ENCODE measurements at regions of chr13 and their contacts with region 1.

Region 1: DNA sequence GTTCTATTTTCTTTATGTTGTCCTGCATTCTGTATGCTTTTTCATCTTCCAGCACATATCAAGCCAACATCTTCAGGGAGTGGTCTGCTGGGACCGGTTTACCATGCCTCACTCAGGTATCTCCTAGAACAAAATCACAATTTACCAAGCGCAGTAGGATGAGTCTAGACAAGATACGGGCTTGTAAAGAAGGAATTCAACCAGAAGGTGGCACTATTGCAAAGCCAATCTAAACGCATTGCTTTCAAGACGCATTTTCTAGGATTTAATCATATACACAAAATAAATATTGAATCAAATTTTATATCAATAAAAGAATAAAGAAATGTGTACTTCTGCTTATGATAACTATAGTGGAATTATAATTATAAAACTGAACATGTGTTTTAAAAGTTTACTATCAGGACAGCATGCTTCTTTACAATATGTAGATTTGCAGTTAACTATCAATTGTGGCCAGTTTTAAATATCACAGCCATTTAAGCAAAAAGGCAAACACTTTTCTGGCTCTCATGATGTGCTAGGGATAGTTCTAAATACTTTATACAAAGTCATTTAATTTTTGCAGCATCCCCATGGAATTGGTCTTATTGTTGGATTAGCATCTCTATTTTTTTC is 16.1 kb upstream of the TPP2 start:
- DNase-seq: peak; percentile 74
- H3K4me3 Mint-ChIP-seq: no peak overlapping the region
- H3K27ac Mint-ChIP-seq: no peak overlapping the region
- H3K4me1 Mint-ChIP-seq: peaks cover 5% of the 10 kb centered on the region
- H3K27me3 Mint-ChIP-seq: peaks cover 13% of the 10 kb centered on the region
- CTCF ChIP-seq: peak; percentile 67

Region 2: GRCh38 chr13:102606537-102607309 is 26.1 kb after region 1 on chr13:
- CTCF ChIA-PET with region 1: interaction called, 10 read pairs
- POLR2A ChIA-PET with region 1: no interaction called
- intact Hi-C with region 1: no loop called
- DNase-seq: no peak
- H3K4me3 Mint-ChIP-seq: no peak overlapping the region
- H3K27ac Mint-ChIP-seq: no peak overlapping the region
- H3K4me1 Mint-ChIP-seq: peaks cover 10% of the 10 kb centered on the region
- H3K27me3 Mint-ChIP-seq: no peaks in the 10 kb centered on the region
- CTCF ChIP-seq: no peak

Region 3: GRCh38 chr13:102773441-102774215 is 193.0 kb after region 1 on chr13 and contains the start of gene TEX30:
- CTCF ChIA-PET with region 1: interaction called, 5 read pairs
- POLR2A ChIA-PET with region 1: no interaction called
- intact Hi-C with region 1: loop called (anchors 1 kb)
- DNase-seq: peak; percentile 79
- H3K4me3 Mint-ChIP-seq: peak within 1 kb of the TSS; percentile 80
- H3K27ac Mint-ChIP-seq: peak within 1 kb of the TSS; percentile 87
- H3K4me1 Mint-ChIP-seq: peaks cover 18% of the 10 kb centered on the region
- H3K27me3 Mint-ChIP-seq: no peaks in the 10 kb centered on the region
- CTCF ChIP-seq: no peak
- total RNA-seq, gene TEX30: 10.7 and 14.2 TPM in 2 replicates

Region 4: DNA sequence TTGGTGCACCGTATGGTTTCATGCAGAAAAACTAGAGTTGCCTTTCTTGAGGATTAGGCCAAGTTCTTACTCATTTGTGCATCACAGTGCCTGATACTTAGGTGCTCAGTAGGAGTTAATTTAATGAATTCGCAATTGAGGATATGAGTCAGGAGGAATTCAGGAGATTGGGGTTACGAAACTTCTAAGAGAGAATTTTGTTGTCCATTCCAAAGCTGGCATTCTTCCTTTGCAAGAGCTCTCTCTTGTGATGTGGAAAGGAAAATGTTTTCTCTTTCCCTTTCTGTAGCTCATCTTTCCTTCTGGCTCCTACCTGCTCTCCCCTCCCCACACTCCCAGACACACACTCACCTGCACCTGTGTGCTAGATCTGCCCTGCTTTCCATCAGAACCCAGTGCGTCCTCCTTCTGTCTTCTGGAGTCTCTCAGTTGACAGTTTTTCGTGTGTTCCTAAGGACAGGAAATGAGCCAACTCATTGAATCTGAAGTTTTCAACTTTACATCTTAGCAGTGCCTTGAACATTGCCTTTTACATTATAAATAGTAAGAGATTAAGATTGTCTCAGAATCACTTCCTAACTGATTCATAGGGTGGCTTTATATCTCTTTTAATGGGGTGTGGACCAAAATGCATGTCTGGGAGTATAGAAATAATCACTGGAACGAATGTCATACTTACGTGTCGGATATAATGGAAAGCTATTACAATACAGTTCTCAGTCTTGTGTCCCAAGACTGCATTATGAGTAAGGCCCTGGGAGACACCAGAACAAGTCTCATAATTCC is 245.5 kb after region 1 on chr13:
- CTCF ChIA-PET with region 1: interaction called, 5 read pairs
- POLR2A ChIA-PET with region 1: interaction called, 3 read pairs
- intact Hi-C with region 1: loop called (anchors 1 kb)
- DNase-seq: peak; percentile 91
- H3K4me3 Mint-ChIP-seq: peak overlapping the region; percentile 72
- H3K27ac Mint-ChIP-seq: peak overlapping the region; percentile 82
- H3K4me1 Mint-ChIP-seq: peaks cover 24% of the 10 kb centered on the region
- H3K27me3 Mint-ChIP-seq: no peaks in the 10 kb centered on the region
- CTCF ChIP-seq: peak; percentile 9

Region 5: DNA sequence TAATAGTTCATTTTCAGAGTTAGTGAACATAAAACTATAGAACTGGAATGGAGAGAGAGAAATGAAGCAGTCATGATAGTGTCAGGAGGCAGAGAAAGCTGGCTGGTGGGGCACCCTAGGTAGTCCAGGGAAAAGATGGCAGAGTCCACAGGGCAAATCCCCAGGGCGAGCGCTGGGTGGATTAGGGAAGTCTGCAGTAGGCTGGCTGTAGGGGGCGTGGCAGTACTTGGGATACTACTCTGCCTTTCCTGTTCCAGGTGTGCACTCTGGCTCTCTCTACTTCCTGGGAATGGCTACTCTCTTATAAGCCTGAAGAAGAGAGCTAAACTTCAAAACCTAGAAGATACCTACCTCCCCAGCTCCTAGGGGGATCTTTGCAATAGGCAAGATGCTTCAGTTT is 718.4 kb after region 1 on chr13:
- CTCF ChIA-PET with region 1: no interaction called
- POLR2A ChIA-PET with region 1: no interaction called
- intact Hi-C with region 1: no loop called
- DNase-seq: no peak
- H3K4me3 Mint-ChIP-seq: no peak overlapping the region
- H3K27ac Mint-ChIP-seq: no peak overlapping the region
- H3K4me1 Mint-ChIP-seq: no peaks in the 10 kb centered on the region
- H3K27me3 Mint-ChIP-seq: no peaks in the 10 kb centered on the region
- CTCF ChIP-seq: no peak

Region 6: GRCh38 chr13:104011505-104012241 is 1431.0 kb after region 1 on chr13:
- CTCF ChIA-PET with region 1: no interaction called
- POLR2A ChIA-PET with region 1: no interaction called
- intact Hi-C with region 1: no loop called
- DNase-seq: no peak
- H3K4me3 Mint-ChIP-seq: no peak overlapping the region
- H3K27ac Mint-ChIP-seq: no peak overlapping the region
- H3K4me1 Mint-ChIP-seq: peaks cover 16% of the 10 kb centered on the region
- H3K27me3 Mint-ChIP-seq: no peaks in the 10 kb centered on the region
- CTCF ChIP-seq: no peak

Measured in MCF 10A (cell line).